HCT116 (cell line): ENCODE measurements at regions of chr12 and their contacts with region 1.

Region 1: DNA sequence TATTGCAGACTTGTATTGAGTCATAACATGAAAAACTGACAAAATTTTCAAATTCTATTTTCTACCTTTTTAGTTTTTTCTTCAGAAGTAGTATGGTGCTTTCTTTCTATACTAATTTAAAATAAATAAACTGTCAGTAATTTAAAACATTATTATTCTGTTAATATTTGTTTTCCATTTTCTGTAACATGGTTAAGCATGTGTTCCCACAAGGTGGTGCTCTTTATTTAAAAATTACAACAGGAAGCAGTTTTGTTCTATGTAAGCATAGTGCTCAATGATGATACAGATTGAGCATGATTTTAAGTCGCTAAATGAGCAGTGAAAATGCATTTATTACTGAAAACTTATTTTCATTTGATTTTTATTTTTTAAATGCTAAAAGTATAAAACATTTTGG is 114.6 kb downstream of the PPFIA2 start:
- DNase-seq: peak; percentile 33
- ATAC-seq: 0 out of 2 replicates have a peak, but pooled peaks have one; percentile 55
- H3K4me3 ChIP-seq: no peak overlapping the region
- H3K27ac ChIP-seq: no peak overlapping the region
- H3K4me1 ChIP-seq: no peaks in the 10 kb centered on the region
- H3K27me3 ChIP-seq: no peaks in the 10 kb centered on the region
- CTCF ChIP-seq: peak; percentile 31 to 85 (median 47); a peak in 5 of 6 replicates
- POLR2A ChIP-seq: no peak
- RAD21 ChIP-seq: peak; percentile 85

Region 2: DNA sequence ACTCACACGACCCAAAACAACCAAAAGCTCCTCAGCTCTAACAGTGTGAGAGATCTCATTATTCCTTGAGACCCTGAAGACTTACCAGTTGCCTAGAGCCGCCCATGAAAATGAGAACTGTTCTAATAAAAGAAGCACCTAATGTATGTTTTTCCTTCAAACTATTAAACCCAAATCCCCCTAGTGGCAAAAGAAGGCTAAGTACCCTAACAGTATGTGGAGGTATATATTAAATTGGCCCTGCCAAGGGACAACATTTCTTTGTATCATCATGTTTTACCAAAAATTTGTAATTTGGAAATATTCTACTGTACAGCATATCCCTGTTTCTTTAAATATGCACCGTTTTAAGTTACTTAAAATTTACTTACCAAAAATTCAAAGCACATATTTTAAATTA is 152.6 kb after region 1 on chr12:
- CTCF ChIA-PET with region 1: no interaction called
- POLR2A ChIA-PET with region 1: no interaction called
- RAD21 ChIA-PET with region 1: no interaction called
- intact Hi-C with region 1: loop called (anchors 10 kb)
- DNase-seq: peak; percentile 24
- ATAC-seq: peak; percentile 73
- H3K4me3 ChIP-seq: no peak overlapping the region
- H3K27ac ChIP-seq: no peak overlapping the region
- H3K4me1 ChIP-seq: no peaks in the 10 kb centered on the region
- H3K27me3 ChIP-seq: no peaks in the 10 kb centered on the region
- CTCF ChIP-seq: peak; percentile 4 to 71 (median 50); a peak in 4 of 6 replicates
- POLR2A ChIP-seq: no peak
- RAD21 ChIP-seq: peak; percentile 39; the same call in 1 of the 2 replicates

Region 3: DNA sequence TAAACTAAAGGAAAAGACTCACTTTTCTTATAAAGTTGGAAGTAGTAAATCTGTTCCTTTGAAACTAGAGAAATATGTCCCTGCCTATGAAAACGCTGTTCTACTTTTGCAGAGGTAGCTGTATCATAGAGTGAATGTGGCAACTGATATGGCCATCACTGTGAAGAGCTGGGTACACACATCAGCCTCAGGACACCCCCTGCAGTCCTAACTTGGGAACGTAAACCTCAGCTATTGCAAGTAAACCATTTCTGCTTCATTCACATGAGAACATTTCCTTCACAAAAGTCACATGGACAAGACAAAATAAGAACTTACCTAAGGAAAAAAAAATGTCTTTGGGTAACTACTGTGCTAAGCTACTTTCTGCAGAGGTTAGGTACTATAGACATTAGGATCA is 348.0 kb after region 1 on chr12:
- CTCF ChIA-PET with region 1: interaction called, 8 read pairs
- POLR2A ChIA-PET with region 1: no interaction called
- RAD21 ChIA-PET with region 1: no interaction called
- intact Hi-C with region 1: loop called (anchors 1 kb)
- DNase-seq: peak; percentile 21
- ATAC-seq: peak; percentile 76
- H3K4me3 ChIP-seq: no peak overlapping the region
- H3K27ac ChIP-seq: no peak overlapping the region
- H3K4me1 ChIP-seq: no peaks in the 10 kb centered on the region
- H3K27me3 ChIP-seq: no peaks in the 10 kb centered on the region
- CTCF ChIP-seq: peak in 2 of 3 experiments; percentile 25 to 31; a peak in 2 of 6 replicates
- POLR2A ChIP-seq: no peak
- RAD21 ChIP-seq: peak; percentile 48

Region 4: GRCh38 chr12:82326905-82327503 is 682.5 kb after region 1 on chr12:
- CTCF ChIA-PET with region 1: interaction called, 4 read pairs
- POLR2A ChIA-PET with region 1: no interaction called
- RAD21 ChIA-PET with region 1: no interaction called
- intact Hi-C with region 1: loop called (anchors 1 kb)
- DNase-seq: peak; percentile 19
- ATAC-seq: no peak
- H3K4me3 ChIP-seq: no peak overlapping the region
- H3K27ac ChIP-seq: no peak overlapping the region
- H3K4me1 ChIP-seq: no peaks in the 10 kb centered on the region
- H3K27me3 ChIP-seq: no peaks in the 10 kb centered on the region
- CTCF ChIP-seq: peak; percentile 49 to 55 (median 53); a peak in 4 of 6 replicates
- POLR2A ChIP-seq: no peak
- RAD21 ChIP-seq: peak; percentile 74

Region 5: GRCh38 chr12:82358200-82359114 is 714.0 kb after region 1 on chr12 and contains the starts of genes CCDC59 and METTL25:
- CTCF ChIA-PET with region 1: interaction called, 18 read pairs
- POLR2A ChIA-PET with region 1: no interaction called
- RAD21 ChIA-PET with region 1: no interaction called
- intact Hi-C with region 1: loop called (anchors 1 kb)
- DNase-seq: peak; percentile 97
- ATAC-seq: peak; percentile 95
- H3K4me3 ChIP-seq: peak within 1 kb of the TSS; percentile 84 to 88
- H3K27ac ChIP-seq: peak within 1 kb of the TSS; percentile 65
- H3K4me1 ChIP-seq: peaks cover 3 to 15% of the 10 kb centered on the region in 2 experiments; a peak in 3 of 4 replicates
- H3K27me3 ChIP-seq: no peaks in the 10 kb centered on the region
- CTCF ChIP-seq: peak; percentile 82 to 99 (median 89)
- POLR2A ChIP-seq: peak; percentile 63
- RAD21 ChIP-seq: peak; percentile 29; the same call in 1 of the 2 replicates
- total RNA-seq, gene CCDC59: 76.6 TPM
- total RNA-seq, gene METTL25: 4.4 TPM

Region 6: DNA sequence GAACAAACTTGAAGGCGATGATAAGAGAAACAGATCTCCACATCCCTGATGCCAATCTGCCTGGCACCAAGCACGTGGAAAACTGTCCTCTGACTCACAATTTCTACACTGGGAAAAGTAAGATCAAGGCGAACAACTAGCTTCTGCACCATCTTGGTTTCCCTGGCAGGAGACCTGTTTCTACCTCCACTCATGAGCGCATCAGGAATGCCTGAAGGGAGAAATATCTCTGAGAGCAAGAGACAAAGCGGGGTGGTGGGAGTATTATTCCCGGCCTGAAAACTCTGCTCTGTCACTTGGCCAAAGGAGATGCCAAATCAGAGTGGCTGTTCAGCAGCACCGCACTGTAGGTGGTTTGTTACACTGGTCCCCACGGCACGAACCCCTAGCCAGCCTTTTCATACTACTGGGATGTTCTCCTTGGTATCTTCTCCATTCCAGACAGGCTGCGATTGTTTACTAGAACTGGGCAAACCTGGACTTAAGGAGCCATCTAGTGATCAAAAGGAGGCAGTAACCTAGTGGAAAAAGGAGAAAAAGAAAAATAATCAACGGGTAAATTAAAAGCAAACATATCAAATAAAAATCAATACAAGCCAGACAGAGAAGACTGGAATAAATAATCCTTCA is 983.2 kb after region 1 on chr12:
- CTCF ChIA-PET with region 1: interaction called, 3 read pairs
- POLR2A ChIA-PET with region 1: no interaction called
- RAD21 ChIA-PET with region 1: no interaction called
- intact Hi-C with region 1: loop called (anchors 2 kb)
- DNase-seq: peak; percentile 26
- ATAC-seq: peak; percentile 82
- H3K4me3 ChIP-seq: no peak overlapping the region
- H3K27ac ChIP-seq: no peak overlapping the region
- H3K4me1 ChIP-seq: no peaks in the 10 kb centered on the region
- H3K27me3 ChIP-seq: no peaks in the 10 kb centered on the region
- CTCF ChIP-seq: peak; percentile 56 to 62 (median 62); a peak in 5 of 6 replicates
- POLR2A ChIP-seq: no peak
- RAD21 ChIP-seq: peak; percentile 87